Naive thymus-derived CD4-positive, alpha-beta T cell (primary cell): ENCODE measurements at regions of chr22 and their contacts with region 1.

Region 1: DNA sequence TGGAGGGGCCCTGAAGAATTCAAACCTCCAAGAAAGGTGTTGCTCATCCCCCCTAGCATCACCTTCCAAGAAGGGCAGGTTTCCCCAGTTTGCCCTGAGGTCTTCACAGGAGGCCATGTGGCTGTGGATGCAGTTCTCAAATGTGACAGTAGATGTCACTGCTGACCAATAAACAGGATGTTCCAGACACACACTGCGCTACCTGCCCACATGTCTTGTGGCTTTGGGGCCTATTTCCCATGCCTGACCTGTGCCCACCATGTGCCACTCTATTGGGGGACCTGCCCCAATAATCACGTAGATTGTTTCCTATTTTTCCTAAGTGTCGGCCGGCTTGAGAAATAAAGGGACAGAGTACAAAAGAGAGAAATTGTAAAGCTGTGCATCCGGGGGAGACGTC is 4.5 kb downstream of the GSTT2 start:
- DNase-seq: peak in 7 of 9 donors; percentile 31 to 69 (median 37)
- ATAC-seq: peak; percentile 89
- H3K4me3 ChIP-seq: no peak overlapping the region
- H3K4me3 Mint-ChIP-seq: no peak overlapping the region
- H3K27ac ChIP-seq: no peak overlapping the region
- H3K27ac Mint-ChIP-seq: peak overlapping the region in 2 of 9 donors; percentile 10 to 16
- H3K4me1 ChIP-seq: no peaks in the 10 kb centered on the region
- H3K4me1 Mint-ChIP-seq: peaks cover 0 to 10% (median 2%) of the 10 kb centered on the region in 7 donors
- H3K27me3 ChIP-seq: no peaks in the 10 kb centered on the region
- H3K27me3 Mint-ChIP-seq: peaks cover 0 to 4% (median 0%) of the 10 kb centered on the region in 5 donors

Region 2: DNA sequence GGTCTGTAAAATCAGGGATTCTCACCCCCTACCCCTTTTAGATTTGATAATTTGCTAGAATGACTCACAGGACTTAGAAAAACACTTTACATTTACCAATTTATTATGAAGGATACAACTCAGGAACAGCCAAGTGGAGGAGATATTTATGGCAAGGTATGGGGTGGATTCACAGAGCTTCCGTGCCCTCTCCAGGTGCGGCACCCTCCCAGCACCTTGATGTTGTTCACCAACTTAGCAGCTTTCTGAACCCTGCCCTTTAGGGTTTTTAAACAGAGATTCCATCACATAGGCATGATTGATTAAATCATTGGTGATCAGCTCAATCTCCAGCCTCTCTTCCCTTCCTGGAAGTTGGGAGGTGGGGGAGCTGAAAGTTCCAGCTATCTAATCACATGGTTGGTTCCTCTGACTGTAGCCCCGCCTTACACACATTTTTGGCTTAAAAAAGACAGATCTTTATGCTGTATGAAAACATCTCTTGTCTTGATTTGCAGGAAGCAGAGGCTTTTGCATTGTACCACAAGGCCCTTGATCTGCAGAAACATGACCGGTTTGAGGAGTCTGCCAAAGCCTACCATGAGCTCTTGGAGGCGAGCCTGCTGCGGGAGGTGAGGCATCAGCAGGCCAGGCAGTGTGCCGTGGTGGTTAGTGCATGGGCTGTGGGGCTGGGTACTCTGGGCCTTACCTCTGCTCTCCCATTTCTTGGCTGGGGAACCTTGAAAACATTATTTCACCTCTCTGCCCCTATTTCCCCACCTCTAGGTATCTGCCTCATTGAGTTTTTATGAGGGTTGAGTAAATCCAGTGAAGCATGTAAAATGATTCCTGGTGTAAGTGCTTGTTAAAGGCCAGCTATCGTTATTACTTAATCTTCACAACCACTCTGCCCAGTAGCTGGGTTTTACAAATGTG is 53.7 kb after region 1 on chr22:
- CTCF ChIA-PET with region 1: no interaction called
- POLR2A ChIA-PET with region 1: no interaction called
- intact Hi-C with region 1: loop called in 1 of 2 experiments (anchors 5 kb)
- DNase-seq: peak in 7 of 9 donors; percentile 44 to 80 (median 73)
- ATAC-seq: peak; percentile 89
- H3K4me3 ChIP-seq: no peak overlapping the region
- H3K4me3 Mint-ChIP-seq: peak overlapping the region in 9 of 10 donors; percentile 61 to 83 (median 80)
- H3K27ac ChIP-seq: peak overlapping the region; percentile 62
- H3K27ac Mint-ChIP-seq: peak overlapping the region; percentile 77 to 97 (median 92)
- H3K4me1 ChIP-seq: peaks cover 0 to 36% of the 10 kb centered on the region in 2 donors
- H3K4me1 Mint-ChIP-seq: peaks cover 25 to 86% (median 76%) of the 10 kb centered on the region in 7 donors
- H3K27me3 ChIP-seq: no peaks in the 10 kb centered on the region
- H3K27me3 Mint-ChIP-seq: no peaks in the 10 kb centered on the region

Region 3: DNA sequence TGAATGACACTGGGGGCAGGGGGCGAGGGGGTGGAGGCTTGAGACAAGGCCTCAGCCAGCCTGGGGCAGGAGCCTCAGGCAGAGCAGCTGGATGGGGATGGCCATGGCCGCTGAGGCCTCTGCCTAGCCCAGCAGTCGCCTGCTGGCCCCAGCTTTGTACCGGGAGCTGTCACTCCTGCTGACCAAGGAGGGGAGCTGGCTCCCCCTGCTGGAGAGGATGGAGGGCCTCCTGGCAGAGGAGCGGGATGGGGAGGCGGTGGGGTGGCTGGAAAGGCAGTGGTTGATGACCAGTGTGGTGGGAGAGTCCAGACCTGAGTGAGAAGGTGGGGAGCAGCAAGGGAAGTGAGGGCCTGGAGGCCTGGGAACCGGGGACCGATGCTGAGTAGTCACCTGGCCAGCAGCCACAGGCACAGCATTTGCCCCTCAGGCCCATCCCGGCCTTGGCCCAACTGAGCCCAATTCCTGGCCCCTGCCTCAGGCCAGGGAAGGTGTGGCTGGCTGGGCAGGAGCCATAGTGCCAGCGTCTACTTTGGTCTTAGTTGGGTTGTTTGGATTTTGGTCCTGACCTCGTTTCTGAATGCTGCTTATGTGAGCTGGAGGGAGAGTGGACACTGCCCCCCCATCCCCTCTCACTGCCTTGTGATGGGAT is 190.9 kb after region 1 on chr22:
- CTCF ChIA-PET with region 1: no interaction called
- POLR2A ChIA-PET with region 1: no interaction called
- intact Hi-C with region 1: loop called (anchors 5 to 10 kb)
- DNase-seq: peak; percentile 35 to 69 (median 60)
- ATAC-seq: peak; percentile 73
- H3K4me3 ChIP-seq: no peak overlapping the region
- H3K4me3 Mint-ChIP-seq: no peak overlapping the region
- H3K27ac ChIP-seq: no peak overlapping the region
- H3K27ac Mint-ChIP-seq: peak overlapping the region in 3 of 9 donors; percentile 17 to 46 (median 34)
- H3K4me1 ChIP-seq: no peaks in the 10 kb centered on the region
- H3K4me1 Mint-ChIP-seq: no peaks in the 10 kb centered on the region
- H3K27me3 ChIP-seq: no peaks in the 10 kb centered on the region
- H3K27me3 Mint-ChIP-seq: no peaks in the 10 kb centered on the region

Region 4: GRCh38 chr22:24230911-24231656 is 246.7 kb after region 1 on chr22:
- CTCF ChIA-PET with region 1: no interaction called
- POLR2A ChIA-PET with region 1: no interaction called
- intact Hi-C with region 1: loop called in 1 of 2 experiments (anchors 5 kb)
- DNase-seq: peak; percentile 19 to 72 (median 41)
- ATAC-seq: peak; percentile 85
- H3K4me3 ChIP-seq: no peak overlapping the region
- H3K4me3 Mint-ChIP-seq: no peak overlapping the region
- H3K27ac ChIP-seq: no peak overlapping the region
- H3K27ac Mint-ChIP-seq: peak overlapping the region in 3 of 9 donors; percentile 38 to 81 (median 61)
- H3K4me1 ChIP-seq: no peaks in the 10 kb centered on the region
- H3K4me1 Mint-ChIP-seq: peaks cover 0 to 9% (median 0%) of the 10 kb centered on the region in 7 donors
- H3K27me3 ChIP-seq: no peaks in the 10 kb centered on the region
- H3K27me3 Mint-ChIP-seq: no peaks in the 10 kb centered on the region

Region 5: GRCh38 chr22:24525416-24526037 is 541.1 kb after region 1 on chr22:
- CTCF ChIA-PET with region 1: no interaction called
- POLR2A ChIA-PET with region 1: no interaction called
- intact Hi-C with region 1: loop called in 1 of 2 experiments (anchors 5 kb)
- DNase-seq: peak; percentile 54 to 77 (median 71)
- ATAC-seq: peak; percentile 98
- H3K4me3 ChIP-seq: no peak overlapping the region
- H3K4me3 Mint-ChIP-seq: no peak overlapping the region
- H3K27ac ChIP-seq: no peak overlapping the region
- H3K27ac Mint-ChIP-seq: no peak overlapping the region
- H3K4me1 ChIP-seq: no peaks in the 10 kb centered on the region
- H3K4me1 Mint-ChIP-seq: peaks cover 0 to 12% (median 9%) of the 10 kb centered on the region in 7 donors
- H3K27me3 ChIP-seq: no peaks in the 10 kb centered on the region
- H3K27me3 Mint-ChIP-seq: peaks cover 0 to 7% (median 0%) of the 10 kb centered on the region in 5 donors